ENCODE measurements at regions of chr6 and their contacts with region 1.

Region 1: GRCh38 chr6:7129784-7130569 is 22.2 kb downstream of the RREB1 start:
- H3K4me3 Mint-ChIP-seq: peak overlapping the region; percentile 26
- H3K27ac Mint-ChIP-seq: peak overlapping the region; percentile 78
- H3K4me1 Mint-ChIP-seq: peaks cover 79% of the 10 kb centered on the region
- H3K27me3 Mint-ChIP-seq: no peaks in the 10 kb centered on the region

Region 2: GRCh38 chr6:7166410-7167305 is 36.7 kb after region 1 on chr6:
- intact Hi-C with region 1: loop called (anchors 5 kb)
- H3K4me3 Mint-ChIP-seq: no peak overlapping the region
- H3K27ac Mint-ChIP-seq: peak overlapping the region; percentile 82
- H3K4me1 Mint-ChIP-seq: peaks cover 92% of the 10 kb centered on the region
- H3K27me3 Mint-ChIP-seq: no peaks in the 10 kb centered on the region

Measured in dendritic cell treated with granulocyte-macrophage colony-stimulating factor and Interleukin-4, amounts not matched to agents 40 ng/mL and 50 ng/mL, for 4 days (primary cell).